Psoas muscle (tissue), 8 donors: ENCODE measurements at regions of chr1 and their contacts with region 1.

Region 1: DNA sequence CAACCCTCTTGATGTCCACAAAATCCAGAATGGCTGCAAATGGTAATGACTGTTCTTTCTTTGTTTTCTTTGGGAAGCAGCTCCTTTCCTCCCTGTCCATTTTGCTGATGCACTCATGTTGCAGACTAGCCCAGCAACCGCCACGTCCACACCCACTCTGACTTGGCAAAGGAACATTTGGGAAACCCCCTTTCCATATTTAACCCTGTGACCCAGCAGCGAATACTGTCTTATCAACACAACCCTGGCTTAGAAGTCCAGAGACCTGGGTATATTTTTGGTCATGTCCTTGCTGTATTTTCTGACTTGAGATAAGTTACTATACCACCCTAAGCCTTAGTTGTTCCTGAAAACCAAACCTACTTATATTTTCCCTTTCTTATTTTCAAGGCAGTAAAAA is 18.1 kb upstream of the SHE start:
- DNase-seq: no peak
- ATAC-seq: no peak
- H3K4me3 ChIP-seq: no peak overlapping the region
- H3K27ac ChIP-seq: no peak overlapping the region
- H3K4me1 ChIP-seq: no peaks in the 10 kb centered on the region
- H3K27me3 ChIP-seq: peaks cover 0 to 17% (median 0%) of the 10 kb centered on the region in 3 donors
- CTCF ChIP-seq: no peak

Region 2: GRCh38 chr1:154485106-154485505 is 35.2 kb before region 1 on chr1:
- intact Hi-C with region 1: loop called in 1 of 2 experiments (anchors 5 kb)
- DNase-seq: peak in 1 of 2 donors; percentile 34
- ATAC-seq: peak; percentile 30 to 72 (median 62)
- H3K4me3 ChIP-seq: no peak overlapping the region
- H3K27ac ChIP-seq: no peak overlapping the region
- H3K4me1 ChIP-seq: peaks cover 11% of the 10 kb centered on the region
- H3K27me3 ChIP-seq: peaks cover 0 to 5% (median 0%) of the 10 kb centered on the region in 3 donors
- CTCF ChIP-seq: no peak